ENCODE measurements at regions of chr11 and their contacts with region 1.

Region 1: DNA sequence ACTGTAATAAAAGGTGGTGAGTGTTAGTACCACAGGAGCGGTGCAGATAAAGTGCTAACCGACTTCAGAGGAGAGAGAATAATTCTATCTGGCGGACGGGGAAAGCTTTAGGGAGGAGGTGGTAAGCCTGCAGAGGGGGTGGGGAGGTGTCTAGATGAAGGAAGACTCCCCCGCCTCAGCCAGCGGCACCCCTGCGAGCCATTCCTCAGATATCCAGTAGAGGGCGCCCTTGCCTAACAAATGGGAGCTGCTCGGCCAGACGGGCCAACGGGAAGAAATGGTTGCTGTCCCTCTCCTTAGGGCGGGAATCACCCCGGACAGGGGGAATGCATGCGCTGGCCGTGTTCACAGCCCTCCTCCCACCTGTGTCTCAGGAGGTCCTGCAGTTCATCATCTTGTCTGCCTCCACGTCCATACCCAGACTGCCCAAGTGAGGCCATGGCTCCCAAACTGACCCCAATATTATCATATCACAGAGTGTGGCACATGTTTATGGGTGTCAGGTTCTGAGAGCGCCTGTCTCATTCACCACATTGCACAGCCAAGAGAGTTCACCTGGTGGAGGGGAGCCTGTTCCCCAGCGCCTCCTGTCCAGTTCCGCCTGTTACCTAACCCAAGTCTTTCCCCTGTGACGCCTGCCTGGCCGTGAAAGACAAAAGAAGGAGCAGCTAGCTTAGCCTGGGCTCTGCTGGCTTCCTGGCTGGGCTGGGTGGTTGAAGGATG is 85.5 kb downstream of the ST3GAL4 start:
- DNase-seq: peak; percentile 88 to 94
- H3K4me3 ChIP-seq: no peak overlapping the region
- H3K4me3 Mint-ChIP-seq: no peak overlapping the region
- H3K27ac Mint-ChIP-seq: no peak overlapping the region
- H3K4me1 ChIP-seq: no peaks in the 10 kb centered on the region; the same call in 1 of the 2 replicates
- H3K4me1 Mint-ChIP-seq: peaks cover 7% of the 10 kb centered on the region
- H3K27me3 ChIP-seq: peaks cover 4% of the 10 kb centered on the region
- H3K27me3 Mint-ChIP-seq: peaks cover 35% of the 10 kb centered on the region
- CTCF ChIP-seq: peak; percentile 98 to 99

Region 2: DNA sequence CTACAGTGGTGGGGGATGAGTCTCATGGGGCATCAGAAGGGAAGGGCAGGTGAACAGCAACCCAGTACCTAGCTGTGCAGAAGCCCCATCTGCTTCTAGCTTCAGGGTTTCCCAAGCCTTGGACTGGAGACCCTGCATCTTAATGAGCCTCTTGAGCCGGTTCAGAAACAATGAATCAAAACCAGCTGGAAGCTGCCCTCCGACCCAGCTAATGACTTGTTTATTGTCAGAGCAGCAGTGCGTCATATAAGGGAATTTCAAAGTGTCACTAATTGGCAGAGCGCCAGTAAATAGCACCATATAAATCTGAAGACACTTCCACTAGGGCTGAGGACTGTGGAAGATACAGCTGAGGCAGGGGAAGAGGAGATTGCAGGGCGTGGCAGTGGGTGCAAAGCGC is 287.0 kb before region 1 on chr11:
- CTCF ChIA-PET with region 1: no interaction called
- POLR2A ChIA-PET with region 1: no interaction called
- intact Hi-C with region 1: no loop called
- DNase-seq: no peak
- H3K4me3 ChIP-seq: no peak overlapping the region
- H3K4me3 Mint-ChIP-seq: no peak overlapping the region
- H3K27ac Mint-ChIP-seq: no peak overlapping the region
- H3K4me1 ChIP-seq: peaks cover 27% of the 10 kb centered on the region
- H3K4me1 Mint-ChIP-seq: peaks cover 14% of the 10 kb centered on the region
- H3K27me3 ChIP-seq: 0 out of 2 replicates have a peak, but pooled peaks cover 1% of the 10 kb centered on the region
- H3K27me3 Mint-ChIP-seq: no peaks in the 10 kb centered on the region
- CTCF ChIP-seq: no peak

Region 3: GRCh38 chr11:126480410-126481302 is 39.7 kb after region 1 on chr11:
- CTCF ChIA-PET with region 1: interaction called, 84 read pairs
- POLR2A ChIA-PET with region 1: no interaction called
- intact Hi-C with region 1: loop called (anchors 1 kb)
- DNase-seq: peak; percentile 83 to 86
- H3K4me3 ChIP-seq: no peak overlapping the region
- H3K4me3 Mint-ChIP-seq: peak overlapping the region; percentile 56
- H3K27ac Mint-ChIP-seq: peak overlapping the region; percentile 61
- H3K4me1 ChIP-seq: peaks cover 6% of the 10 kb centered on the region
- H3K4me1 Mint-ChIP-seq: peaks cover 6% of the 10 kb centered on the region
- H3K27me3 ChIP-seq: peaks cover 4% of the 10 kb centered on the region
- H3K27me3 Mint-ChIP-seq: peaks cover 30% of the 10 kb centered on the region
- CTCF ChIP-seq: peak; percentile 92 to 98

Region 4: DNA sequence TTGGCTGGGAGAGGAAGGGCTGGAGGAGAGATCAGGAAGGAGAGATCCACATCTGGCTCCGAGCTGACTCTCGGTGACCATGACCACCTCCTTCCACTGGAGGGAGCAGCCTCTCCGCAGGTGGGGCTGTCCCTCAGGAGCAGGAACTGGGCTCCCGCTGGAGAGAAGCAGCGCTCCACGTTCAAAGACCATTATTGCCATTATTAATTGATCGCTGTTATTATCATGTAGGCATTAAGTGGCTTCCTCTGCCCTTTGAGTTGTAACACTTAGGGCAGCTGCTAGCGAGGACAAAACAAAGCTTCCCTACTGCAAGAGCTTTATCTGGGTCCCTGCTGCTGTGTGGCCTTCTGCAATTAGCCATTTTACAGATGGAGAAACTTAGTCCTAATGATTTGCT is 166.4 kb after region 1 on chr11:
- CTCF ChIA-PET with region 1: interaction called, 3 read pairs
- POLR2A ChIA-PET with region 1: no interaction called
- intact Hi-C with region 1: loop called (anchors 2 kb)
- DNase-seq: peak; percentile 76 to 79
- H3K4me3 ChIP-seq: no peak overlapping the region
- H3K4me3 Mint-ChIP-seq: no peak overlapping the region
- H3K27ac Mint-ChIP-seq: no peak overlapping the region
- H3K4me1 ChIP-seq: no peaks in the 10 kb centered on the region
- H3K4me1 Mint-ChIP-seq: no peaks in the 10 kb centered on the region
- H3K27me3 ChIP-seq: peaks cover 2% of the 10 kb centered on the region
- H3K27me3 Mint-ChIP-seq: peaks cover 26% of the 10 kb centered on the region
- CTCF ChIP-seq: peak; percentile 88 to 98

Region 5: GRCh38 chr11:126989942-126990715 is 549.2 kb after region 1 on chr11:
- CTCF ChIA-PET with region 1: interaction called, 7 read pairs
- POLR2A ChIA-PET with region 1: no interaction called
- intact Hi-C with region 1: loop called (anchors 1 kb)
- DNase-seq: peak; percentile 83 to 84
- H3K4me3 ChIP-seq: no peak overlapping the region
- H3K4me3 Mint-ChIP-seq: no peak overlapping the region
- H3K27ac Mint-ChIP-seq: no peak overlapping the region
- H3K4me1 ChIP-seq: no peaks in the 10 kb centered on the region
- H3K4me1 Mint-ChIP-seq: no peaks in the 10 kb centered on the region
- H3K27me3 ChIP-seq: no peaks in the 10 kb centered on the region
- H3K27me3 Mint-ChIP-seq: peaks cover 36% of the 10 kb centered on the region
- CTCF ChIP-seq: peak; percentile 98 to 99

Region 6: GRCh38 chr11:127789927-127790326 is 1349.0 kb after region 1 on chr11:
- CTCF ChIA-PET with region 1: no interaction called
- POLR2A ChIA-PET with region 1: no interaction called
- intact Hi-C with region 1: loop called (anchors 2 kb)
- DNase-seq: peak; percentile 60 to 71
- H3K4me3 ChIP-seq: no peak overlapping the region
- H3K4me3 Mint-ChIP-seq: no peak overlapping the region
- H3K27ac Mint-ChIP-seq: no peak overlapping the region
- H3K4me1 ChIP-seq: no peaks in the 10 kb centered on the region
- H3K4me1 Mint-ChIP-seq: peaks cover 7% of the 10 kb centered on the region
- H3K27me3 ChIP-seq: no peaks in the 10 kb centered on the region
- H3K27me3 Mint-ChIP-seq: no peaks in the 10 kb centered on the region
- CTCF ChIP-seq: peak; percentile 69 to 77

Region 7: GRCh38 chr11:128157423-128158298 is 1716.7 kb after region 1 on chr11:
- CTCF ChIA-PET with region 1: no interaction called
- POLR2A ChIA-PET with region 1: no interaction called
- intact Hi-C with region 1: loop called (anchors 5 kb)
- DNase-seq: peak; percentile 65 to 80
- H3K4me3 ChIP-seq: no peak overlapping the region
- H3K4me3 Mint-ChIP-seq: peak overlapping the region; percentile 24
- H3K27ac Mint-ChIP-seq: no peak overlapping the region
- H3K4me1 ChIP-seq: no peaks in the 10 kb centered on the region
- H3K4me1 Mint-ChIP-seq: no peaks in the 10 kb centered on the region
- H3K27me3 ChIP-seq: peaks cover 2% of the 10 kb centered on the region; the same call in 1 of the 2 replicates
- H3K27me3 Mint-ChIP-seq: peaks cover 23% of the 10 kb centered on the region
- CTCF ChIP-seq: peak; percentile 86 to 99